ENCODE measurements at regions of chr4 and their contacts with region 1.

Region 1: GRCh38 chr4:102789317-102789717 is 28.5 kb upstream of the MANBA start:
- DNase-seq: peak; percentile 76
- ATAC-seq: peak; percentile 52
- H3K4me3 ChIP-seq: no peak overlapping the region
- H3K27ac ChIP-seq: peak overlapping the region; percentile 63
- H3K4me1 ChIP-seq: no peaks in the 10 kb centered on the region; the same call in 1 of the 2 replicates
- H3K27me3 ChIP-seq: no peaks in the 10 kb centered on the region
- CTCF ChIP-seq: no peak

Region 2: GRCh38 chr4:102535398-102536082 is 253.8 kb before region 1 on chr4:
- CTCF ChIA-PET with region 1: no interaction called
- POLR2A ChIA-PET with region 1: no interaction called
- intact Hi-C with region 1: no loop called
- DNase-seq: peak; percentile 60
- ATAC-seq: peak; percentile 79
- H3K4me3 ChIP-seq: no peak overlapping the region
- H3K27ac ChIP-seq: no peak overlapping the region
- H3K4me1 ChIP-seq: peaks cover 25% of the 10 kb centered on the region
- H3K27me3 ChIP-seq: no peaks in the 10 kb centered on the region
- CTCF ChIP-seq: no peak

Region 3: DNA sequence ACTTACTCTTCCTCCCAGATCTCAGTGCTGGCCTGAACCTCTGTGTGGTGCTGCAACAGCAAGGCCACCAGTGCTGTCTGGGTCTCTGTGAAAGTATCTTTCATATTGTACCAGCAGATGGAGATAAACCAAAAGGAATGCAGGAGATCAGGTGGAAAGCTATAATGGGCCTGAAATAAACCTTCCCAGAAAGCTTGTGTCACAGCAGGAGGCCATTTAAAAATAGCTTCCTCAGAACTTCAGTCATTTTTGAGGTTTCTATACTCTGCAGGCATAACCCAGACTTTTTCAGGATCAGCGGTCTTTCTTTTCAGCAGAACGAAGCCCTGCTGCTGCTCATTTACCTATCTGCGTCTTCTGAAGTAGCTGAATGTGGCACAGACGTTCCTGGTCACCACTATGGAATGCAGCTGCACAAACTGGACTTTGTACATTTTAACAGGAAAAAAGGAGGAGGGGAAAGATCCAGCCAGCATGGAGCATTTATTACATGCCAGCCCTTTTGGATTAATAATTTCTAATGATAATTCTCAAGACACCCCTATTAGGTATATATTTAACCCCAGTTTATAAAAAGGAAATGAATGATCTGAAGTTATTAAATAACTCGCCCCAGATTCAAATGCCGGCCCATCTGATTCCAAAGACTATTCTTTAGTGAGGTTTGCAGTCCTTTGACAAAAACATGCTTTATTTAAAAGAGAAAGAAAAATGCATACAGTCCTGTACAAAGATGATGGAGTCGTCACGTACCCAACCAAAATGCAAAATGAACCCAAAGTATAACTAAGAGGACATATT is 168.4 kb before region 1 on chr4:
- CTCF ChIA-PET with region 1: no interaction called
- POLR2A ChIA-PET with region 1: no interaction called
- intact Hi-C with region 1: loop called (anchors 2 kb)
- DNase-seq: peak; percentile 78
- ATAC-seq: peak; percentile 90
- H3K4me3 ChIP-seq: peak overlapping the region; percentile 60
- H3K27ac ChIP-seq: peak overlapping the region; percentile 68
- H3K4me1 ChIP-seq: peaks cover 24% of the 10 kb centered on the region
- H3K27me3 ChIP-seq: no peaks in the 10 kb centered on the region
- CTCF ChIP-seq: peak; percentile 86

Region 4: DNA sequence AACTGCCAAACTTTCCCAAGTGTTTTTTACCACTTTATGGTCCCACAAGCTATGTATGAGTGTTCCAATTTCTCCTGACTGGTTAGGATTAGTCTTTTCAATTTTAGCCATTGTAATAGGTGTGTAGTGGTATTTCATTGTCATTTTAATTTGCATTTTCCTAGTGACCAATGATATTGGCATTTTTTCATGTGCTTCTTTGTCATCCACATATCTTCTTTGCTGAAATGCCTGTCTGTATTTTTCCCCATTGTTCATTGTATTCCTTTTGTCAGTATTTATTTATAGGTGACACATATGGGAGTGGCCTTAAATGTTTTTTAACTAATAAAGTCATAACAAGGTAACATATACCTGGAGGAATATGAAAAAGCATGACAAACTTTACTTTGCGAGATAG is 47.3 kb after region 1 on chr4:
- CTCF ChIA-PET with region 1: no interaction called
- POLR2A ChIA-PET with region 1: no interaction called
- intact Hi-C with region 1: no loop called
- DNase-seq: peak; percentile 25
- ATAC-seq: peak; percentile 49
- H3K4me3 ChIP-seq: no peak overlapping the region
- H3K27ac ChIP-seq: no peak overlapping the region
- H3K4me1 ChIP-seq: peaks cover 4% of the 10 kb centered on the region; the same call in 1 of the 2 replicates
- H3K27me3 ChIP-seq: no peaks in the 10 kb centered on the region
- CTCF ChIP-seq: no peak

Region 5: GRCh38 chr4:102945066-102945465 is 155.7 kb after region 1 on chr4:
- CTCF ChIA-PET with region 1: no interaction called
- POLR2A ChIA-PET with region 1: no interaction called
- intact Hi-C with region 1: no loop called
- DNase-seq: no peak
- ATAC-seq: no peak
- H3K4me3 ChIP-seq: no peak overlapping the region
- H3K27ac ChIP-seq: no peak overlapping the region
- H3K4me1 ChIP-seq: no peaks in the 10 kb centered on the region
- H3K27me3 ChIP-seq: no peaks in the 10 kb centered on the region
- CTCF ChIP-seq: no peak